Right lobe of liver (tissue), 6 donors: ENCODE measurements at regions of chr19 and their contacts with region 1.

Region 1: GRCh38 chr19:2867025-2867991 is at the start of gene ZNF556:
- DNase-seq: no peak
- ATAC-seq: no peak
- H3K4me3 ChIP-seq: no peak within 1 kb of the TSS
- H3K27ac ChIP-seq: no peak within 1 kb of the TSS
- H3K4me1 ChIP-seq: no peaks in the 10 kb centered on the region
- H3K27me3 ChIP-seq: no peaks in the 10 kb centered on the region
- CTCF ChIP-seq: no peak
- POLR2A ChIP-seq: no peak
- total RNA-seq, gene ZNF556: not detected

Region 2: DNA sequence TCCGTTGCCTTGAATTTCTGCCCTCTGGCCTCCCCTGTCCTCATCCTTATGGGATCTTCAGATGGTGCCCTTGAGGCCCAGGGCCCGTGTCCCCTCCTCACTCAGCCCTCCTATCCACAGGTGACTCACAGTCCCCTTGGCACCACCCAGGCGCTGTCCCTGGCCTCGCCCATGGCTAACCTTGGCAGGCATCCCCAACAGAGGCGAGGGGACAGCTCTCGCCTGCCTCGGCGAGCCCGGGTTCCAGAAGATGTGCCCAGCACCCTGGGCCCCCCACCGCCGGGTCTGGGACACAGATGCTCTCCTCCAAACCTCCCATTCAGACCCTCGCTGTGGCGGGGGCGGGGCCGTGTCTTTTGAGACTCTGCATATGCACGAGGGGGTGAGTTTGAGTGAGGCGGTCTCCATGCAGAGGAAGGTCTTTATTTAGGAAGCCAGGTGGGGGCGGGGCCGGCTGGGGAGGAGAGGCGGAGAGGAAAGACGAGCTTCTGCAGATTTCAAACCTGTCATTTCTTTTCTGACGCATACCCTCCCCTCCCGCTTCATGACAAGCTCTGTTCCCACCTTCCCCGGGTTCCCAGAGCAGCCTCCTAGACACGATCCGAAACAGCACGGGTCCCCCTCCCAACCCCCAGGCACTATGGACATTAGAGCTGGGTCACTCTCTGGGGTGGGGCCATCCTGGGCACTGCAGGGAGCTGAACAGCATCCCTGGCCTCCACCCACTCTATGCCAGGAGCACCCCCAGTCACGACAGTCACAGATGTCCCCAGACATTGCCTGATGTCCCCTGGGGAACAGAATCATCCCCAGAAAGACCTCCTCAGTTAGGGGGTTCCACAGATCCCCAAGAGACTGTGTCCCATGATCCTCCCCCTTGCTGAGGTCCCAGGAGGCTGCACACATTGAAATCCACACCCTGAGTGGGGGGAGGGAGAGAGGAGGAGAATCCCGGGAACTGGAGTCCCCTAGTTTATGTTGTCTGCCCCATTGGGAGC is 213.3 kb before region 1 on chr19:
- intact Hi-C with region 1: loop called (anchors 10 kb)
- DNase-seq: no peak
- ATAC-seq: peak in 1 of 4 donors; percentile 30
- H3K4me3 ChIP-seq: no peak overlapping the region
- H3K27ac ChIP-seq: no peak overlapping the region
- H3K4me1 ChIP-seq: no peaks in the 10 kb centered on the region
- H3K27me3 ChIP-seq: no peaks in the 10 kb centered on the region
- CTCF ChIP-seq: no peak
- POLR2A ChIP-seq: no peak